Activated CD4-positive, alpha-beta T cell treated with anti-CD3 and anti-CD28 coated beads, Interleukin-2, amount 10 ng/mL, durations not matched to agents 24 days and 14 days (primary cell): ENCODE measurements at regions of chr17 and their contacts with region 1.

Region 1: DNA sequence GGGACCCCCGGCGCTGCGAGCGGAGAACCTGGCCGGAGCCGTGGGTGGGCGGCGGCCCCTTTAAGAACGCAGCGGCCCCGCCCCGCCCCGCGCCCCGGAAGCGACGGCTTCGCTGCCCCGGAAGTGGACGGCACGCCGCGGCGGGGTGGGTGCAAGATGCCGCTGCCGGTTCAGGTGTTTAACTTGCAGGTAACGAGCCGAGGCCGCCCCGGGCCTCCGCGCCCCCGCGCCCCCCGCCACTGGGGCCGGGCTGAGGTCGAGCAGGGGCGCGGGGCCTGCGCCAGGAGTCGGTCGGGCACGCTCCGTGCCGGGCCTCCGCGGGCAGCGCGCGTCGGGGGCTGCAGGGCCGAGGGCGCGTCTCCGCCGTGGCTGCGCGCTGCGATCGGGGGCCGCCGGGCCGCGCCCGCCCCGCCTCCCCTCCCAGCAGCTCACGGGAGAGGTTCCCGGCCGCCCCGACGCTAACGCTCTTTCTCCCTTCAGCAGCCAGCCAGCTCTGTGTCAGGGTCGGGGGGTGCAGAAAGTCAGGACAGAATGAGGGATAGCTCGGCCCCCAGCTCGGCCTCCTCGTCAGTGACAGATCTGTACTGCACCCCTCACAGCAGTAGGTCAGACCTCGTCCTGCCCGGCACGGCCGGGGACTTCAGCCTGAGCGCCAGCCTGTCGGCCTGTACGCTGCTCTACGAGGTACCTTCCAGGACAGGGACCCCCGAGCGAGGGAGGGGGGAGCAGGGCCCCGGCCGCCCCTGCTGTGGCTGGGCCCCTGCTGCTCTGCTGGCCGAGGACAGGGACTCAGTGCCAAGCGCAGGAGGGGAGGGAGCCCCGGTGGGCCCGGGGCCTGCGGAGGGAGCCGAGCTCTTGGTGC is at the starts of genes GPS1 and RFNG:
- DNase-seq: peak; percentile 95
- H3K4me3 Mint-ChIP-seq: peak within 1 kb of the TSS; percentile 90
- H3K27ac Mint-ChIP-seq: peak within 1 kb of the TSS; percentile 91
- H3K4me1 Mint-ChIP-seq: peaks cover 16% of the 10 kb centered on the region
- H3K27me3 Mint-ChIP-seq: no peaks in the 10 kb centered on the region
- total RNA-seq, gene GPS1: 117 and 118 TPM in 2 replicates
- total RNA-seq, gene RFNG: 21.4 and 30.8 TPM in 2 replicates

Region 2: DNA sequence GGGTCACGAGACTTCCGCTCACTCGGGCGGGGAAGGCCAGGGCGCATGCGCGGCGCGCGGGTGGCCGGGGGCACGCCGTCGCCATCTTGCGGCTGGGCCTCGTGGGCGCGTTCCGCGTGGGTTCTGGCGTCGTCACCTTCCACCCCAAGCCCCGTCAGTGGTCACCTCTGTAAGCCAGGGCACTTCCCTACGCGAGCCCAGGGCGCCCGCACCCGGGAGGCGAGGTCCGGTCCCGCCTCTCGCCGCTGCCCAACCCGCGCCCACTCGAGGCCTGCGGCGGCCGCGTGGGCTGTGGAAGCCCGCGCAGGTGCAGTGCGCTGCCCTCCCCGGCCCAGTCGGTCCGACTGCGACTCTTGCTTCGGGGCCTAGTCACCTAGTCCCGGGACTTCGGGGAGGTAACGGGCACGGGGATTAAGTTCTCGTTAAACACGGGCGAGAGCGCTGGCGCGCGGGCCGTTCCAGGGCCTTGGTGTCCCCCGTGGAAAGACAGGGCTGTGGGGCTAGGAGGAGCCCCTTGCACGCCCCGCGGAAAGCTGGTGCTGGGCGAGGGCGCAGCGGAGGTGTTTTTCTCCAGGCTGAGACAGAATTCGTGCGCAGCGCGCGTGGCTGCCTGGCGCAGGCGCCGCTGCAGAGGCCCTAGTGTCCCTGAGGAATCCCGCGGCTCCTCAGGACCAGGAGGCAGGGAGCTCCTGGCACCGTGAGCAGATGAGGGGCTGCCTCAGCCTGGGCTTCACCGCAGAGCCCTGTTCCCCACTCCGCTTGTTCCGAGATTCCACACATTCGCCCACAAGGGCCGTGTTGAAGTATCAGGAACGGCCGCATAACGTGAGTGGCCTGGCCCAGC is 180.4 kb before region 1 on chr17:
- intact Hi-C with region 1: no loop called
- DNase-seq: peak; percentile 99
- H3K4me3 Mint-ChIP-seq: peak overlapping the region; percentile 87
- H3K27ac Mint-ChIP-seq: peak overlapping the region; percentile 96
- H3K4me1 Mint-ChIP-seq: peaks cover 31% of the 10 kb centered on the region
- H3K27me3 Mint-ChIP-seq: no peaks in the 10 kb centered on the region

Region 3: GRCh38 chr17:82012640-82013295 is 39.2 kb before region 1 on chr17:
- intact Hi-C with region 1: no loop called
- DNase-seq: no peak
- H3K4me3 Mint-ChIP-seq: no peak overlapping the region
- H3K27ac Mint-ChIP-seq: no peak overlapping the region
- H3K4me1 Mint-ChIP-seq: no peaks in the 10 kb centered on the region
- H3K27me3 Mint-ChIP-seq: no peaks in the 10 kb centered on the region

Region 4: DNA sequence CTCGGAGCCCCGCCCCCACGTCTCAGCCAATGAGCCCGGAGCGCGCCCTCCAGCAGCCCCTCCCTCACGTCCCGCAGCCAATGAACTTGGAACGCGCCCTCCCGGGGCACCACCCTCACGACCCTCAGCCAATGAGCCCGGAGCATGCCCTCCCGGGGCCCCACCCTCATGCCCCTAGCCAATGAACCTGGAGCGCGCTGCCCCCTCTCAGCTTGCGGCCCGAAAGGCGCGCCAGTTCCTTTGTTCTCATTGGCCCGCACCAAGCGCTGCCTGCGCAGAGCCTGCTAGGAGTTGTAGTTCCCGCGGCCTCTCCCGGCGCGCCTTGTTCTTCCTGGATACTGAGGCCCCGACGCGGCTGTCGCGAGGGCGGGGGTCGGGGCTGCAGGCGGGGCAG is 29.0 kb before region 1 on chr17 and contains the start of gene LRRC45:
- intact Hi-C with region 1: no loop called
- DNase-seq: peak; percentile 100
- H3K4me3 Mint-ChIP-seq: peak within 1 kb of the TSS; percentile 88
- H3K27ac Mint-ChIP-seq: peak within 1 kb of the TSS; percentile 76
- H3K4me1 Mint-ChIP-seq: peaks cover 23% of the 10 kb centered on the region
- H3K27me3 Mint-ChIP-seq: no peaks in the 10 kb centered on the region
- total RNA-seq, gene LRRC45: 39.0 and 40.6 TPM in 2 replicates

Region 5: GRCh38 chr17:82037113-82037888 is 14.7 kb before region 1 on chr17 and contains the start of gene DCXR:
- intact Hi-C with region 1: loop called (anchors 2 kb)
- DNase-seq: peak; percentile 99
- H3K4me3 Mint-ChIP-seq: peak within 1 kb of the TSS; percentile 83
- H3K27ac Mint-ChIP-seq: peak within 1 kb of the TSS; percentile 96
- H3K4me1 Mint-ChIP-seq: peaks cover 19% of the 10 kb centered on the region
- H3K27me3 Mint-ChIP-seq: peaks cover 2% of the 10 kb centered on the region
- total RNA-seq, gene DCXR: 128 TPM in 2 replicates

Region 6: GRCh38 chr17:82065638-82066303 is 13.8 kb after region 1 on chr17 and contains the start of gene DUS1L:
- intact Hi-C with region 1: loop called (anchors 1 kb)
- DNase-seq: peak; percentile 94
- H3K4me3 Mint-ChIP-seq: peak within 1 kb of the TSS; percentile 84
- H3K27ac Mint-ChIP-seq: peak within 1 kb of the TSS; percentile 89
- H3K4me1 Mint-ChIP-seq: peaks cover 4% of the 10 kb centered on the region
- H3K27me3 Mint-ChIP-seq: no peaks in the 10 kb centered on the region
- total RNA-seq, gene DUS1L: 230 and 232 TPM in 2 replicates